ENCODE measurements at regions of chr9 and their contacts with region 1.

Region 1: GRCh38 chr9:17462869-17463464 is 115.9 kb upstream of the SH3GL2 start:
- DNase-seq: peak; percentile 13
- CTCF ChIP-seq: peak; percentile 69

Region 2: GRCh38 chr9:17063535-17064135 is 399.3 kb before region 1 on chr9:
- CTCF ChIA-PET with region 1: interaction called, 14 read pairs
- POLR2A ChIA-PET with region 1: no interaction called
- DNase-seq: peak; percentile 16
- CTCF ChIP-seq: peak; percentile 64

Region 3: GRCh38 chr9:17204611-17205152 is 258.3 kb before region 1 on chr9:
- CTCF ChIA-PET with region 1: no interaction called
- POLR2A ChIA-PET with region 1: no interaction called
- DNase-seq: no peak
- CTCF ChIP-seq: no peak

Region 4: GRCh38 chr9:17476401-17476800 is 13.4 kb after region 1 on chr9:
- CTCF ChIA-PET with region 1: interaction called, 14 read pairs
- POLR2A ChIA-PET with region 1: no interaction called
- DNase-seq: no peak
- CTCF ChIP-seq: no peak

Measured in GM10248 (cell line).